Right ventricle myocardium superior (tissue), 1 donor: ENCODE measurements at regions of chr12 and their contacts with region 1.

Region 1: DNA sequence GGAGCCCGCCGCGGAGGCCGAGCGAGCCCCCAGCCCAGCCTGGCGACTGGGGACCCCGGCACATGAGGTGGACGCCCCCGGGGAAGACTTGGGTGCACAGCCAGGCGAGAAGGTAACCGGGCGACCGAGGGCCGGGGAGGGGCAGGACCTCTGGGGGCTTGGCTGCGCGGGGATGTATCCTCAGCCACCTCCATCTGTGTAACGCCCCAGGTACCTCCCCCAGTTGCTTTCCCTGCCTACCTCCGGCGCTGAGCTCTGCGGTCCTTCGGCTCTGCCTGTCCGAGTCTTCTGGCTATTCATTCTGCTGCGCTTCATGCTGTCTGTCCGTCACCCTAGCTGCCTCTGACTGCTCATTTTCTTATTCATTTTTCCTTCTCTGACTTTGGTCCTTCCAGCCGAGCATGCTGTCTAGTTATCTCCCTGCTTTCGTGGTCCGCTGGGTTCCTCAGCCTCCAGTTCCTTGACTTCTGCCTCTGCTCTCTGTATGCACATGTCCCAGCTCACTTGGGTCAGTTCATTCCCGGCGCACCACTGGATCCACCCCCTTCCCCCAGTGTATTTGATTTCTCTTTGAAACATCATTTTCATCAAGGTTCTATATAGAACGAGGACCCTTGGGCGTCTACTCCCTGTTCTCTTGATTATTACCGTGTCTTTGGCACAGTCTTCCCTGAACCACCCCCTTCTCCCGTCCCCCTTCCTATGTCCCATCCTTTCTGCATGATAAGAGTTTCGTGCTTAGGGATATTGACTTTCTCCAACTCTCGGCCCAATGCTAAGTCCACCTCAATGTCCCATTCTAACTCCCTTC is 612 bp downstream of the PHC1 start:
- DNase-seq: peak; percentile 61
- ATAC-seq: peak; percentile 65

Region 2: GRCh38 chr12:9049520-9050133 is 134.7 kb after region 1 on chr12:
- intact Hi-C with region 1: loop called (anchors 10 kb)
- DNase-seq: no peak
- ATAC-seq: peak; percentile 70